Activated CD8-positive, alpha-beta T cell treated with anti-CD3 and anti-CD28 coated beads, Interleukin-2, amount 10 ng/mL, durations not matched to agents 7 days and 5 days (primary cell): ENCODE measurements at regions of chr19 and their contacts with region 1.

Region 1: GRCh38 chr19:17441241-17442021 is 7.0 kb downstream of the TMEM221 start:
- DNase-seq: peak; percentile 54
- ATAC-seq: peak; percentile 79
- H3K4me3 Mint-ChIP-seq: no peak overlapping the region
- H3K27ac Mint-ChIP-seq: no peak overlapping the region
- H3K4me1 Mint-ChIP-seq: no peaks in the 10 kb centered on the region
- H3K27me3 Mint-ChIP-seq: no peaks in the 10 kb centered on the region

Region 2: DNA sequence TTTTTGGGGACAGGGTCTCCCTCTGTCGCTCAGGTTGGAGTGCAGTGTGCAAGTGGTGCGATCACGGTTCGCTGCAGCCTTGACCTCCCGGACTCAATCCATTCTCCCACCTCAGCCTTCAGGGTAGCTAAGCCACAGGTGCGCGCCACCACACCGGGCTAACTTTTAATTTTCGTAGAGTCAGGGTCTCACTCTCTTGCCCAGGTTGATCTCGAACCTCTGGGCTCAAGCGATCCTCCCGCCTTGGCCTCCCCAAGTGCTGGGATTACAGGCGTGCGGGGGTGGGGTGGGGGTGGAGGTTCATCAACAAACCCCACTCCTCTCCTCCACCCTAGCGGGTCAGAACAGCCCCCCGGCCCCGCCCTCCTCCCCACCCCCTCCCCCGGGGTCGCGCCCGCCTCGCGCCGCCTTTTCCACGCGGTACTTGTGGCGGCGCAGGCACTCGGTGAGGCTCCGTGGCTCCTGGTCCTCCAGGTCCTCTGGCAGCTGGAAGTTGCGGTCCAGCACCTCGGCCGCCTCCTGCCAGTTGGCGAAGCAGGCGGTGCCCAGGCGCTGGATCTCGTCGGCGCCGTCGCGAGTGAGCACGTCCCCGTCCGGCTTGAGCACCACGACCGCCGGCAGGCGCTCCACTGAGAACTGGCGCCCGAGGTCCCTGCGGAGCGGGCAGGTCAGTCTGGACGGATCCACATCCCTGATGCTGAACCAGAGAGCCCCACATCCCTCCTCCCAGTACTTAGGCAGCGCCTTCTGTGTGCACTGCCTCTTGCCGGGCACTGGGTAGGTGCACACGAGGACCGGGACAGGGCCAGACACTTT is 14.1 kb after region 1 on chr19:
- CTCF ChIA-PET with region 1: no interaction called
- POLR2A ChIA-PET with region 1: no interaction called
- DNase-seq: no peak
- ATAC-seq: no peak
- H3K4me3 Mint-ChIP-seq: no peak overlapping the region
- H3K27ac Mint-ChIP-seq: no peak overlapping the region
- H3K4me1 Mint-ChIP-seq: peaks cover 5% of the 10 kb centered on the region
- H3K27me3 Mint-ChIP-seq: peaks cover 35% of the 10 kb centered on the region

Region 3: GRCh38 chr19:17470068-17470841 is 28.8 kb after region 1 on chr19 and contains the start of gene SLC27A1:
- CTCF ChIA-PET with region 1: interaction called, 12 read pairs
- POLR2A ChIA-PET with region 1: no interaction called
- DNase-seq: peak; percentile 95
- ATAC-seq: peak; percentile 91
- H3K4me3 Mint-ChIP-seq: peak within 1 kb of the TSS; percentile 85
- H3K27ac Mint-ChIP-seq: peak within 1 kb of the TSS; percentile 90
- H3K4me1 Mint-ChIP-seq: peaks cover 47% of the 10 kb centered on the region
- H3K27me3 Mint-ChIP-seq: peaks cover 5% of the 10 kb centered on the region
- total RNA-seq, gene SLC27A1: 7.3 to 7.4 TPM

Region 4: GRCh38 chr19:17555480-17555928 is 114.1 kb after region 1 on chr19 and contains the start of gene COLGALT1:
- CTCF ChIA-PET with region 1: no interaction called
- POLR2A ChIA-PET with region 1: no interaction called
- DNase-seq: peak; percentile 100
- ATAC-seq: peak; percentile 96
- H3K4me3 Mint-ChIP-seq: peak within 1 kb of the TSS; percentile 85
- H3K27ac Mint-ChIP-seq: peak within 1 kb of the TSS; percentile 78
- H3K4me1 Mint-ChIP-seq: peaks cover 21% of the 10 kb centered on the region
- H3K27me3 Mint-ChIP-seq: no peaks in the 10 kb centered on the region
- total RNA-seq, gene COLGALT1: 74.6 to 75.0 TPM